ENCODE measurements at regions of chr10 and their contacts with region 1.

Region 1: GRCh38 chr10:69639291-69640195 is 9.5 kb downstream of the FAM241B start:
- DNase-seq: peak; percentile 47 to 92
- H3K4me3 ChIP-seq: no peak overlapping the region
- CTCF ChIP-seq: peak in 1 of 3 donors; percentile 55
- POLR2A ChIP-seq: no peak

Region 2: GRCh38 chr10:69408318-69409175 is 231.0 kb before region 1 on chr10:
- intact Hi-C with region 1: loop called (anchors 10 kb)
- DNase-seq: peak; percentile 92 to 99
- H3K4me3 ChIP-seq: no peak overlapping the region
- CTCF ChIP-seq: no peak
- POLR2A ChIP-seq: no peak

Region 3: DNA sequence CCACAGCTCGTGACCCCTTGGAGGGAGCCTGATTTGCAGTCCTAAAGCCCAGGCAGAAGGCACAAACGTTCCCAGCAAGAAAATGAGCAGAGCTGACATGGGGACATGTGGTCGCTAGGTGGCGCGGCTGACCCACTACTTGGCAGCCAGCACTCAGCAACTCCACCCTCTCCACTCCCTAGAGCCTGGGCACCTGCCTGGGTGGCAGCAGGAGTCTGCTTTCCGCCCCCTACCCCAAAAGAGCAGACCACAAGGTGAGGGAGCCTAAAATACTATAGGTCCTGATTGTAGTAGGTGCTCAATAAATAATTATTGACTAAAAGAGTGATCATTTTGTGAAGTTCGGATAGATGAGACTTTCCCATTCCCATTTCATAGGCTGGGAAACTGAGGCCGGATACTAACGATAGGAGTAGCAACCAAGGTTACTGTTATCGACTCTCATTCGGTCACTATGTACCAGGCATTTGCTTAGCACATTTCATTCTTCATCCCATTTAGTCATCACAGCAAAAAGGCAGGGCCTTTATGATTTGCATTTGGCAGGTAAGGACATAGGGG is 123.8 kb before region 1 on chr10:
- intact Hi-C with region 1: loop called (anchors 5 kb)
- DNase-seq: peak; percentile 42 to 91
- H3K4me3 ChIP-seq: no peak overlapping the region
- CTCF ChIP-seq: peak in 1 of 3 donors; percentile 30
- POLR2A ChIP-seq: no peak

Region 4: DNA sequence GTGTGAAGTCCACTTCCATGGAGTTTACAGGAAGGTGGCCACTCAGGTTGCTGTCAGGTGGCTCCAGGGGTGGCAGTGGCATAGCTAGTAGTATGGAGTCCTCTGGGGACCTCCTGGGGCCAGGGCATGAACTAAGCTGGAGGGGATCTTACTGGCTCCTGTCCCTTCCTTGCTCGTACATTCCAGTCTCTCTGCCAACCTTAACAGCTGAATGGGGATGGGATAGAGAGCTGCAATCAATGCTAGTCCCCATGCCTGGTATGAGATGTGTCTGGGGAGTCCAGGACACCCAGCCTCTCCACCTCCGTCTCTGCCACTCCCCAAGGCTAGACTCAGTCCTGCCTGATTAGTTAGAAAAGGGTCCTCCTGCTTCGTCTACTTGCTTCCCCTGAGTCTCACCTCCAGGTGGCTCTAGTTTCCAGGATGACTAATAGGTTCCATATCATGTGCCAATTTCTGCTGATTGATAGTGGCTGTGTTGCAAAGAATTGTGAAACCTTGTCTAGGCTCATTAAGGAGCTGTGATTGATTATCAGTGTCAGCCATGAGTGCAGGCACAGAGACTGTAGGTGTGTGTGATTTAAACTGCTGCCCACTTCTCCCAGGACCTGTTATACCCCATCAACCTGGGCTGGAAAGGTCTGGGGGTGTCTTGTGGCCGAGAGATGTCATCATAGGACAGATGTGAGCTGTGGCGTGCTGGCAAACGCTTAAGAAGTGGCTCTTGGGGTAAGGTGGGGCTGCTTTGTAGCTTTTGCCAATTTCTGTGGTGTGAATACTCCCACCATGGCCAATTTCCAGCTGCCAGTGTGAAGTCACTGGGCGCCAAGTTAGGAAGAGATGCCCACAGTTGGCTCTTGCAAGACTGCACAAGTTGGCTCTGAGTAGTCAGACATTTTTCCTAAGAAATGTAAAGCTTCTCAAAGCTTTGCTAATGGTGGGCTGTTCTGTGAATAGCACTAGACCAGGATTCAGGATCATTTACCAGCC is 222.0 kb after region 1 on chr10:
- intact Hi-C with region 1: no loop called
- DNase-seq: no peak
- H3K4me3 ChIP-seq: no peak overlapping the region
- CTCF ChIP-seq: no peak
- POLR2A ChIP-seq: no peak

Region 5: GRCh38 chr10:69914398-69915214 is 275.1 kb after region 1 on chr10:
- intact Hi-C with region 1: loop called (anchors 10 kb)
- DNase-seq: peak; percentile 56 to 95
- H3K4me3 ChIP-seq: no peak overlapping the region
- CTCF ChIP-seq: peak in 1 of 3 donors; percentile 96
- POLR2A ChIP-seq: no peak

Measured in lower leg skin (tissue), 4 donors.